Esophagus muscularis mucosa (tissue), 4 donors: ENCODE measurements at regions of chr20 and their contacts with region 1.

Region 1: DNA sequence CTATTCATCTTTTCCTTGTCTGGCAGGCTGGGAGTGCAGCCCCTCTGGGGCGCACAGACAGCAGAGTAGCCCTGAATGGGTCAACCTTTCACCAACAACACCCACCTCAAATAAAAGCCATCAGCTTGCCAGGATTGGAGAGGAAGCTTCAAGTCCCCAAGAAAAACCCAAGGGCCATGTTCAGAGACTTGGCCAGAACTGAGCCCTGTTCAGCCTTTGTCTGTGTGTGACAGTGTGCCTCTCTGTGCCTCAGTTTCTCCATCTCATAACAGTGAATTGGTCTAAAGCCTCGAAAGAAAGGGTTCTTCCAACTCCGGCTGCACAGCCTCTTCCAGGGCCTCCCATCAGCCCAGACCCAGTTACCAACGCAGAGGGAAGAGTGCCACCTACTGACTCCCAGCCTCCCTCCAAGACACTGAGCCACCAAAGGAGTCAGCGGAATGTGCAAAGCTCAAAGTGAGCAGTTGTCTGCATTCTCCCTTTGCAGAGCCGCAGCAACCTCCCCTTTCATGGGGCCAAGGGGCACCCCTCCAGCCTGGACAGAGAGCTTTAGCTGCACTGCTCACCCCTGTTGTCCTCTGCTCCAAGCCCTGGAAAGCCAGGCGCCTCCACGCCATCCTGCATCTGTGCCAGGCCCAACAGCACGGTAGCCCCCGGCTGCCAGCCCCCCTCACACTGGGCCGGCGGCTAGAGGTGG is 82.7 kb upstream of the TOP1 start:
- DNase-seq: no peak
- H3K4me3 ChIP-seq: no peak overlapping the region
- H3K27ac ChIP-seq: no peak overlapping the region
- H3K4me1 ChIP-seq: no peaks in the 10 kb centered on the region
- H3K27me3 ChIP-seq: peaks cover 0 to 20% (median 0%) of the 10 kb centered on the region in 4 donors
- CTCF ChIP-seq: peak in 2 of 3 experiments; percentile 34 to 38
- EP300 ChIP-seq: no peak
- POLR2A ChIP-seq: no peak

Region 2: DNA sequence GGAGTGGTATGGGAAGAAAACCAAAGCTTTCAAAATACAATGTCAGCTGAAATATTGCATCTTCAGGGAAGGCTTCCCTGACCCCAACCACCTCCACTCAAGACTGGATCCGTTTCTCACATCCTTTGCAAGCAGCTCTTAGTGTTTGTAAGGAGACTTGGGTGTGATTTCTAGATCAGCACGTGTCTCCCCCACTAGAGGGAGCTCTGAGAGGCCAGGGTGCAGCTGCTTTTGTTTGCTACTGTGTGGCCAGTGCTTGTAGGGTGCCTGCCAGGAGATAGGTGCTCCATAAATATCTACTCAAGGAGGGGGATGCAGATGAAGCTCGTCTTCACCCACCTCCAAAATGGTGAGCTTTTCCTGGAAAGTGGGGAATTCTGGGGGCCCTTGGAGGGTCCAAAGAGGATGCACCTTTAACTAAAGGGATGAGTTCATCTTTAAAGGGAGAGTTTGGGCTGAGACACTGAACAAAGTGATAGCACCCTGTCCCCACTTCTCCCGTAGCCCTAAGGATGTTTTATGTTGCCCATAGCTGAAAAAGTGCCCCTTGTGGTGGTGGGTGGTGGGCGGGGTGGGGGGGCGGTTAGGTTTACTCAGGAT is 204.3 kb before region 1 on chr20:
- intact Hi-C with region 1: loop called (anchors 5 kb)
- DNase-seq: no peak
- H3K4me3 ChIP-seq: no peak overlapping the region
- H3K27ac ChIP-seq: no peak overlapping the region
- H3K4me1 ChIP-seq: no peaks in the 10 kb centered on the region
- H3K27me3 ChIP-seq: peaks cover 0 to 68% (median 0%) of the 10 kb centered on the region in 4 donors
- CTCF ChIP-seq: peak in 2 of 3 experiments; percentile 27 to 46
- EP300 ChIP-seq: no peak
- POLR2A ChIP-seq: no peak